Caco-2 (cell line): ENCODE measurements at regions of chr2 and their contacts with region 1.

Region 1: GRCh38 chr2:234288974-234289455 is 207.9 kb downstream of the ARL4C start:
- DNase-seq: peak; percentile 53 to 59
- H3K4me3 ChIP-seq: no peak overlapping the region
- H3K4me3 Mint-ChIP-seq: no peak overlapping the region
- H3K27ac Mint-ChIP-seq: peak overlapping the region; percentile 29
- H3K4me1 ChIP-seq: peaks cover 25% of the 10 kb centered on the region
- H3K4me1 Mint-ChIP-seq: peaks cover 22% of the 10 kb centered on the region
- H3K27me3 ChIP-seq: no peaks in the 10 kb centered on the region
- H3K27me3 Mint-ChIP-seq: no peaks in the 10 kb centered on the region
- CTCF ChIP-seq: peak; percentile 43 to 44

Region 2: GRCh38 chr2:234241656-234242458 is 47.2 kb before region 1 on chr2:
- CTCF ChIA-PET with region 1: no interaction called
- POLR2A ChIA-PET with region 1: no interaction called
- intact Hi-C with region 1: no loop called
- DNase-seq: no peak
- H3K4me3 ChIP-seq: no peak overlapping the region
- H3K4me3 Mint-ChIP-seq: no peak overlapping the region
- H3K27ac Mint-ChIP-seq: no peak overlapping the region
- H3K4me1 ChIP-seq: 0 out of 2 replicates have a peak, but pooled peaks cover 6% of the 10 kb centered on the region
- H3K4me1 Mint-ChIP-seq: peaks cover 21% of the 10 kb centered on the region
- H3K27me3 ChIP-seq: no peaks in the 10 kb centered on the region
- H3K27me3 Mint-ChIP-seq: no peaks in the 10 kb centered on the region
- CTCF ChIP-seq: no peak

Region 3: GRCh38 chr2:234406085-234406484 is 117.1 kb after region 1 on chr2:
- CTCF ChIA-PET with region 1: no interaction called
- POLR2A ChIA-PET with region 1: no interaction called
- intact Hi-C with region 1: loop called (anchors 5 kb)
- DNase-seq: peak; percentile 42 to 46
- H3K4me3 ChIP-seq: no peak overlapping the region
- H3K4me3 Mint-ChIP-seq: no peak overlapping the region
- H3K27ac Mint-ChIP-seq: no peak overlapping the region
- H3K4me1 ChIP-seq: peaks cover 30% of the 10 kb centered on the region
- H3K4me1 Mint-ChIP-seq: peaks cover 28% of the 10 kb centered on the region
- H3K27me3 ChIP-seq: no peaks in the 10 kb centered on the region
- H3K27me3 Mint-ChIP-seq: no peaks in the 10 kb centered on the region
- CTCF ChIP-seq: peak in 1 of 2 experiments; percentile 15

Region 4: GRCh38 chr2:234500394-234501006 is 211.5 kb after region 1 on chr2:
- CTCF ChIA-PET with region 1: interaction called, 6 read pairs
- POLR2A ChIA-PET with region 1: no interaction called
- intact Hi-C with region 1: loop called (anchors 1 kb)
- DNase-seq: peak; percentile 56 to 60
- H3K4me3 ChIP-seq: no peak overlapping the region
- H3K4me3 Mint-ChIP-seq: no peak overlapping the region
- H3K27ac Mint-ChIP-seq: no peak overlapping the region
- H3K4me1 ChIP-seq: peaks cover 6% of the 10 kb centered on the region
- H3K4me1 Mint-ChIP-seq: peaks cover 8% of the 10 kb centered on the region
- H3K27me3 ChIP-seq: no peaks in the 10 kb centered on the region
- H3K27me3 Mint-ChIP-seq: no peaks in the 10 kb centered on the region
- CTCF ChIP-seq: peak; percentile 34 to 46